Right ventricle myocardium inferior (tissue), 1 donor: ENCODE measurements at regions of chr3 and their contacts with region 1.

Region 1: GRCh38 chr3:15268033-15268631 is 62.1 kb downstream of the CAPN7 start:
- DNase-seq: peak; percentile 94
- ATAC-seq: peak; percentile 75

Region 2: GRCh38 chr3:14921078-14921616 is 347.0 kb before region 1 on chr3:
- intact Hi-C with region 1: no loop called
- DNase-seq: peak; percentile 94
- ATAC-seq: peak; percentile 93

Region 3: DNA sequence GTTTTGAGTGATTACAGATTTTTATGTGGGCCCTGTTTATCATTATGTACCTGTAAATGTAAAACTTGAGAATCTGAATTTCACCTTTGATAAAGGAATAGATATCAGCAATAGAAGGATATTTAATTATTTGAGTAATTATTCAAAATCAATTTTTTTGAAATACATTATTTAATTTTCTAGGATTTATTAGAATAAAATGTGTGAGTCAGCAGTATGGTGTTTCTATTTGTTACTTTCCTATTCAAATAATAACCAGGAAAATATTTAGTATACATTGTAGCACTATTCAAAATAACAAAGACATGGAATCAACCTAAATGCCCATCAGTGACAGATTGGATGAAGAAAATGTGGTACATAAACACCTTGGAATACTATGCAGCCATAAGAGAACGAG is 40.0 kb before region 1 on chr3:
- intact Hi-C with region 1: no loop called
- DNase-seq: no peak
- ATAC-seq: no peak

Region 4: GRCh38 chr3:15332405-15333098 is 64.4 kb after region 1 on chr3 and contains the start of gene SH3BP5:
- intact Hi-C with region 1: loop called (anchors 2 kb)
- DNase-seq: peak; percentile 91
- ATAC-seq: peak; percentile 81
- total RNA-seq, gene SH3BP5: 11.7 TPM

Region 5: DNA sequence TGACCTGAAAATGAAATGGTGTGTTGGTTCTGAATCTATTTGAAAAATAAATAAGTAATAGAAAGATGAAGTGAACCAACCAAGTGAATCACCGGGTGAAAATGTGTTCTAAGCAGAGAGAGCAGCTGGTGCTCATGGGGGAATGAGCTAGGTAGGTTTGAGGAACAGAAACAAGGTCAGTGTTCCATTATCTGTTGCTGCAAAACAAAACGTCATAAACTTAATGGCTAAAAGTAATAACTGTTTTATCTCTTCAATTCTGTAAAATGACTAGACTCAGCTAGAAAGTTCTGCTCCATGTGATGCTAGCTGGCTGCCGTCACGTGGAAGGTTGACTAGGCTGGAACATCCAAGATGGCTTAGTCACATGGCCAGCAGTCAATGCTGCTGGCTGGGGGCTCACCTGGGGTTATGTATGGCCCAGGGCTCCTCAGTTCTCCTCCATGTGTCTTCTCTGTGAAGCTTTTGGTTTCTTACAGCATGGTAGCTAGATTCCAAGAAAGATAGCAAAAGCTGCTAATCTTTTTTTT is 77.5 kb after region 1 on chr3:
- intact Hi-C with region 1: no loop called
- DNase-seq: no peak
- ATAC-seq: no peak

Region 6: GRCh38 chr3:15377961-15378791 is 110.0 kb after region 1 on chr3:
- intact Hi-C with region 1: loop called (anchors 1 kb)
- DNase-seq: peak; percentile 97
- ATAC-seq: peak; percentile 95

Region 7: DNA sequence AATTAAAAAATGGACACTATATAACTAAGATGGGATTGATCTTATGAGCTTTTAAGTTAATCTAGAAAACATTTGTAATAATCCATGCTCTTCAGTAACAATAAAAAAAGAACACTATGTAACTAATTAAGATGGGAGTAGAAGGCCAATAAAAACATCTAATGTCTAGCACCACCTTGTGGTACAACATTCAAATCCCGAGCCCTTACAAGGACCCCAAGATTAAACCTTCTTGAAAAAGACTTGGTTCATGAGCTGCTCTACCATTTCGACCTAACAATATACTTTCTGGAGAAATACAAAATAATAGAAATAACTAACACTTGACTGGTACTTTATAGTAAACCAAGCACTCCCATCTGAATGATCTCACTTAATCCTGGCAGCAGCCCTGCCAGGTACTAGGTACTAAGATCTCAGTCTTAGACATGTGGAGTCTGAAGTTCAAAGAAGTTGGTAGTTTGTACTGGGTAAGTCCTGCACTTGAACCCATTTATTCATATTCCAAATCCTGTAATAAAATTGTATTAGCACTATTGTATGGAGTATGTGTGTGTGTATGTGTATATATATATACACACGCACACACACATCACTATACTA is 137.4 kb after region 1 on chr3:
- intact Hi-C with region 1: loop called (anchors 5 kb)
- DNase-seq: no peak
- ATAC-seq: peak; percentile 65

Region 8: DNA sequence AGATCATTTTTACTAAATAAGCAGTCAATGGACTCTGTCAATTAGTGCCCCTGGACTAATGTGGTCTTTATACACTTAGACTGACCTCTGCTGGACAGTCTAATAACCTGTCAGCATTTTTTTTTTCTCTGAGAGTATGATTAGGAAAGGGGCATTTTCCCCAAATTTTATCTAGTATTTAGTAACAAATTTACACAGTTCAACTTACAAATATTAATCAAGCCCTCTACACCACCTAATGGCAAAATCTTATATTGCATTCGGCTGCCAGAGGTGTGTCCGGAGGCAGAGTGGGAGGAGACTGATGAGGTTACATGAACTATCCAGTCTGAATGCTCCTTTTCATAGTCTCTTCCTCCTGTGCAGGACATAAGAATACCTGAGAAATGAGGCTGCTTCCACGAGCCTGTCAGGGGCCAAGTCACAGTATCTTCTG is 289.4 kb after region 1 on chr3:
- intact Hi-C with region 1: loop called (anchors 10 kb)
- DNase-seq: no peak
- ATAC-seq: peak; percentile 65